Activated T-helper 1 cell treated with anti-CD3 and anti-CD28 coated beads, Interleukin-12 subunit alpha, Interleukin-12 subunit beta, Interleukin-2, Interleukin-4 antibody, amounts not matched to agents 30 ng/mL and 10 ng/mL and 1 ng/mL, durations not matched to agents 14 hours and 24 hours and 36 hours (primary cell): ENCODE measurements at regions of chr10 and their contacts with region 1.

Region 1: DNA sequence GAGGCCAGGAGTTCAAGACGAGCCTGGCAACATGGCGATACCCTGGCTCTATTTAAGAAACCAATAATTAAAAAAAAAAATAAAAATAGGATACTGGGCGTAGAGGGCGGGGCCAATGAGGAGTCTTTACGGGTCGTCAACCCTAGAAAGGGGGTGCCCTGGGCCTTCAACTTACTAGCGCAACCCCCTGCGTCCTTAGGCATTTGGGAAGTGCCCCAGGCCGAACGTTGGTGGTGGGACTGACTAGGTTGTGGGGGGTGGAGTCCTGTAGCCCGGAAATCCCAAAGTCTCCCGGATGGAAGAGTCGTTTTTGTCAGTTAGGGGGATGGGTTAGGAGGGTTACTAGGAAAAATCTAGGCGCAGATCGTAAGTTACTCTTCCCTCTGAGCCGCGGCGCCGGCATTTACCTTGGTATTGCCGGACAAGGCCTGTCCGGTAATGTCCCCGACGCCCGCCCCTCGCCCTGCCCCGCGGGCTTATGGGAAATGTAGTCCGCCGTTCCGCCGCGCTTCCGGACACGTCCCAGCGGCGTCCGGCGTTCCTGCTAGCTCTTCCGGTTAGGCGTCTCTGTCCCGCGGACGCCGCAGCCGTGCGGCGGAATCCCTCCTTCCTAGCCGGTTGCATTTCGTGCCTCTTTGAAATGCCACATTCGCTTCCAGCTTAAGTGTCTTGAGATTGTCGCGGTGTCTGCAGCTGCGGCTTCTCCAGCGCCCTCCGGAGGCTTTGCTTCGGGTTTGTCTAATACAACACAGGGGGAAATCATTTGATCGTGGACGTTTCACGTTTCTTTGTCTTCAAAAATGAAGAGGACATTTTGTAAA is 1.3 kb upstream of the ACBD5 start:
- DNase-seq: peak; percentile 87
- H3K4me3 Mint-ChIP-seq: peak overlapping the region; percentile 89
- H3K27ac Mint-ChIP-seq: peak overlapping the region; percentile 93
- H3K4me1 Mint-ChIP-seq: peaks cover 29% of the 10 kb centered on the region
- H3K27me3 Mint-ChIP-seq: no peaks in the 10 kb centered on the region

Region 2: GRCh38 chr10:26437637-26438461 is 804.0 kb before region 1 on chr10 and contains the start of gene APBB1IP:
- intact Hi-C with region 1: loop called (anchors 5 kb)
- DNase-seq: peak; percentile 40
- H3K4me3 Mint-ChIP-seq: peak within 1 kb of the TSS; percentile 95
- H3K27ac Mint-ChIP-seq: peak within 1 kb of the TSS; percentile 93
- H3K4me1 Mint-ChIP-seq: peaks cover 51% of the 10 kb centered on the region
- H3K27me3 Mint-ChIP-seq: no peaks in the 10 kb centered on the region
- total RNA-seq, gene APBB1IP: 39.6 and 43.6 TPM in 2 replicates

Region 3: DNA sequence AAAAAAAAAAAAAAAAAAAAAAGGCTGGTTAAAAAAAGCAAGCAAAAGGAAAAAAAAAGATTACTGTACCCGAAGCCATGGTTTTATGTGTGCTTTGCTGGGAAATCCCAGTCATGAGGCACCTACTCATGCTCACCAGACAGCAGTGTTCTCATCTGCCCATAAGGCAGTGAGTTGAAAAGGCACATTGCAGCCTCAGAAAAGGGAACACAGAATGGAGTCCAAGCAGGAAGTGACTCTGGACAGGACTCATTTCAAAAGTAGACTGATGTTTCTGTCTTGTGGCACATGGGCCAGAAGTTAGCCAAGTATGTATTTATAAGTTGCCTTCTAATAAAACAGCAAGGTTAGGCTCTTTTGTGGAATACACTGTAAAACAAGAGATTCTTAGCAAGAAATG is 504.1 kb before region 1 on chr10:
- intact Hi-C with region 1: loop called (anchors 2 kb)
- DNase-seq: peak; percentile 59
- H3K4me3 Mint-ChIP-seq: peak overlapping the region; percentile 45
- H3K27ac Mint-ChIP-seq: peak overlapping the region; percentile 99
- H3K4me1 Mint-ChIP-seq: peaks cover 74% of the 10 kb centered on the region
- H3K27me3 Mint-ChIP-seq: no peaks in the 10 kb centered on the region

Region 4: GRCh38 chr10:27223964-27224363 is 17.9 kb before region 1 on chr10:
- intact Hi-C with region 1: loop called (anchors 1 kb)
- DNase-seq: no peak
- H3K4me3 Mint-ChIP-seq: no peak overlapping the region
- H3K27ac Mint-ChIP-seq: peak overlapping the region; percentile 34
- H3K4me1 Mint-ChIP-seq: peaks cover 11% of the 10 kb centered on the region
- H3K27me3 Mint-ChIP-seq: no peaks in the 10 kb centered on the region

Region 5: GRCh38 chr10:27285108-27285507 is 43.2 kb after region 1 on chr10:
- intact Hi-C with region 1: no loop called
- DNase-seq: no peak
- H3K4me3 Mint-ChIP-seq: no peak overlapping the region
- H3K27ac Mint-ChIP-seq: no peak overlapping the region
- H3K4me1 Mint-ChIP-seq: peaks cover 7% of the 10 kb centered on the region
- H3K27me3 Mint-ChIP-seq: peaks cover 5% of the 10 kb centered on the region

Region 6: DNA sequence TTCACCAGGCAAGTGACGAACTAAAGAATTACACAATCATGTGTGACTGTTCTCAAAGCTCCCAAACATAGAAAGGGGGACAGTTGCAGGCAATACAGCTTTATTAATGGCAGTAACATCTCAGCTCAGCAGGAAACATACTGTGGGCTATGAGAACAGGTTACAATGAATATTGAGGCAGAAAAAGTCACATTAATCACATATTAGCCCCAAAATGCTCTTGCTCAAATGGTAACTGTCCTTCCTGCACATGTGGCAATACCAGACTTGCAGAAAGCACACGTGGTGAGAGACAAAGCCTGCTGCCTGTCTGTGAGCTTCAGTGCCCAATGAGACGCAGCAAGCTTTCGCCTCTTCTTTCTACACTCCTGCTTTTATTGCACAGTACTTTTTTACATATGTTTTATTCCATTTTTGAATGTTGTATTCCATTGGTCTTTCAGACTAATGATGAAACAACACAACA is 103.6 kb after region 1 on chr10:
- intact Hi-C with region 1: loop called (anchors 1 kb)
- DNase-seq: no peak
- H3K4me3 Mint-ChIP-seq: no peak overlapping the region
- H3K27ac Mint-ChIP-seq: peak overlapping the region; percentile 49
- H3K4me1 Mint-ChIP-seq: peaks cover 23% of the 10 kb centered on the region
- H3K27me3 Mint-ChIP-seq: peaks cover 5% of the 10 kb centered on the region